Mammary epithelial cell (primary cell): ENCODE measurements at regions of chr15 and their contacts with region 1.

Region 1: GRCh38 chr15:41039121-41039520 is 77.0 kb downstream of the INO80 start:
- DNase-seq: no peak
- H3K4me3 ChIP-seq: no peak overlapping the region
- H3K27ac ChIP-seq: no peak overlapping the region
- H3K4me1 ChIP-seq: no peaks in the 10 kb centered on the region
- H3K27me3 ChIP-seq: no peaks in the 10 kb centered on the region
- CTCF ChIP-seq: no peak

Region 2: GRCh38 chr15:40960926-40961325 is 78.2 kb before region 1 on chr15:
- CTCF ChIA-PET with region 1: no interaction called
- dilution Hi-C with region 1: loop called (anchors 5 kb)
- in situ Hi-C with region 1: no loop called
- intact Hi-C with region 1: no loop called
- DNase-seq: no peak
- H3K4me3 ChIP-seq: no peak overlapping the region
- H3K27ac ChIP-seq: no peak overlapping the region
- H3K4me1 ChIP-seq: peaks cover 11% of the 10 kb centered on the region
- H3K27me3 ChIP-seq: no peaks in the 10 kb centered on the region
- CTCF ChIP-seq: no peak

Region 3: DNA sequence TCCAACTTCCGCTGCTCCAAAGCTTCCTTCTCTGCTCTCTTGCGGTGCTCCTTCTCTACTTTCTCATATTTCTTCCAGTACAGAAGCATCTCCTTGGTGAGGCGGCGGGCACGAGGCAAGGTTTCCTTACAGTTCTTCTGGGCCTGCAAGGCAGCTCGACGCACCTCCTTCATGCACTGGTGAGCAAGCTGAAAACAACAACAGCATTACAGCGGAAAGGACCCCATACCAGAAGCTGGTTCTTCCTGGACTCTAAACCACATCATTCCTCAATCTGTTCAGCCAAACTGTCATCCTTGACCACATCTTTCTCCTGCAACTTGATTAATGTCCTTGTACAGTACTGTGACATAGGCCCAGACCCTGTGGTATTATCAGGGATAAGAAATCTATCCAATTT is 40.6 kb after region 1 on chr15:
- CTCF ChIA-PET with region 1: no interaction called
- dilution Hi-C with region 1: loop called (anchors 5 kb)
- in situ Hi-C with region 1: no loop called
- intact Hi-C with region 1: no loop called
- DNase-seq: no peak
- H3K4me3 ChIP-seq: no peak overlapping the region
- H3K27ac ChIP-seq: no peak overlapping the region
- H3K4me1 ChIP-seq: no peaks in the 10 kb centered on the region
- H3K27me3 ChIP-seq: no peaks in the 10 kb centered on the region
- CTCF ChIP-seq: no peak

Region 4: DNA sequence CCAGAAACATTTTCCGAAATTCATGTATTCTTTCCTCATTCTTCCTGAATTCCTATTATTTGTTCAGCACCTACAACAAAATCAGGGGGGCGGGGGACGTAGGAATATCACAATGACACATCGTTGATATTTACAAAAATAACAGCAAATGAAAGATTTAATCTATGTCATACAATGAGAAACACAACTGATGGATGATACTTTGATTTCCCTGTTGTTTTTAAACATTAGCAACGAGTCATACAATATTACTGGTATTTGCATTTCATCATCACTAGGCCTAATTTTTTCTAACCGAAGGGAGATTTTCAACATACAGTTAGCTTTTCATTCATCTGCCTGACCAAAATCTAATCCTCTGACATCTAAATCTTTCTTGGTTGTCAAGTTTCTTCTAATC is 122.2 kb after region 1 on chr15:
- CTCF ChIA-PET with region 1: no interaction called
- dilution Hi-C with region 1: loop called (anchors 5 kb)
- in situ Hi-C with region 1: no loop called
- intact Hi-C with region 1: no loop called
- DNase-seq: peak; percentile 24
- H3K4me3 ChIP-seq: no peak overlapping the region
- H3K27ac ChIP-seq: no peak overlapping the region
- H3K4me1 ChIP-seq: no peaks in the 10 kb centered on the region
- H3K27me3 ChIP-seq: no peaks in the 10 kb centered on the region
- CTCF ChIP-seq: no peak